Mammary epithelial cell (primary cell): ENCODE measurements at regions of chr3 and their contacts with region 1.

Region 1: GRCh38 chr3:40584625-40585189 is 59.9 kb downstream of the ZNF621 start:
- DNase-seq: peak; percentile 55
- H3K4me3 ChIP-seq: no peak overlapping the region
- H3K27ac ChIP-seq: no peak overlapping the region
- H3K4me1 ChIP-seq: no peaks in the 10 kb centered on the region
- H3K27me3 ChIP-seq: no peaks in the 10 kb centered on the region
- CTCF ChIP-seq: peak; percentile 89 to 100

Region 2: GRCh38 chr3:40680685-40681657 is 96.3 kb after region 1 on chr3:
- CTCF ChIA-PET with region 1: no interaction called
- dilution Hi-C with region 1: loop called (anchors 5 kb)
- in situ Hi-C with region 1: no loop called
- intact Hi-C with region 1: loop called (anchors 5 kb)
- DNase-seq: peak; percentile 34
- H3K4me3 ChIP-seq: no peak overlapping the region
- H3K27ac ChIP-seq: peak overlapping the region; percentile 6
- H3K4me1 ChIP-seq: peaks cover 20% of the 10 kb centered on the region
- H3K27me3 ChIP-seq: no peaks in the 10 kb centered on the region
- CTCF ChIP-seq: peak in 1 of 2 donors; percentile 9

Region 3: DNA sequence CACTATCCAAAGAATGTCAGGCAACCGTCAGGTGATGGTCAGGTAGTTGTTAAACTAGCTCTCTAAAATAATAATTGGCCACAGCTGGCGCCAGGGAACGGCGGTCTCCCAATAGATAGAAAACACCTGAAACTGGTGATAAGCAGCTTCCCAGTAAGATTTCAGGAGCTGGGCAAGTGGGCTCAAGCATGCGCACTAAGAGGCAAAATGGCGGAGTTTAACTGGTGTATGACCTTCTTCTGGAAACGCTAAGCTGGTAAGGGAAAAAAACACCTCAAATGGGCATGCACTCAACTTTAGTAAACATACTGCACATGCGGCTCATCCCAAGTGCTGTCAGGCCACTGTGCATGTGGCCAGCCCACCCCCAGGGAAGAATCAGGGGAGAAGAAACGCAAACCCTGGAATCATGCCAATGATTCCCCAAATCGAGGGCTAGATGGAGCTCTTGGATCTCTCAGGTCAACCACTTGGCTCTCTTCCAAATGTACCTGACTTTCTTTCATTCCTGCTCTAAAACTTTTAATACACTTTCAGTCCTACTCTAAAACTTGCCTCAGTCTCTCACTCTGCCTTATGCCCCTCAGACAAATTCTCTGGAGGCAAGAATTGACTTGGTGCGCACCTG is 135.1 kb after region 1 on chr3:
- CTCF ChIA-PET with region 1: interaction called, 6 read pairs
- dilution Hi-C with region 1: no loop called
- in situ Hi-C with region 1: no loop called
- intact Hi-C with region 1: loop called (anchors 2 kb)
- DNase-seq: peak; percentile 55
- H3K4me3 ChIP-seq: no peak overlapping the region
- H3K27ac ChIP-seq: no peak overlapping the region
- H3K4me1 ChIP-seq: peaks cover 15% of the 10 kb centered on the region
- H3K27me3 ChIP-seq: no peaks in the 10 kb centered on the region
- CTCF ChIP-seq: peak; percentile 24 to 75

Region 4: DNA sequence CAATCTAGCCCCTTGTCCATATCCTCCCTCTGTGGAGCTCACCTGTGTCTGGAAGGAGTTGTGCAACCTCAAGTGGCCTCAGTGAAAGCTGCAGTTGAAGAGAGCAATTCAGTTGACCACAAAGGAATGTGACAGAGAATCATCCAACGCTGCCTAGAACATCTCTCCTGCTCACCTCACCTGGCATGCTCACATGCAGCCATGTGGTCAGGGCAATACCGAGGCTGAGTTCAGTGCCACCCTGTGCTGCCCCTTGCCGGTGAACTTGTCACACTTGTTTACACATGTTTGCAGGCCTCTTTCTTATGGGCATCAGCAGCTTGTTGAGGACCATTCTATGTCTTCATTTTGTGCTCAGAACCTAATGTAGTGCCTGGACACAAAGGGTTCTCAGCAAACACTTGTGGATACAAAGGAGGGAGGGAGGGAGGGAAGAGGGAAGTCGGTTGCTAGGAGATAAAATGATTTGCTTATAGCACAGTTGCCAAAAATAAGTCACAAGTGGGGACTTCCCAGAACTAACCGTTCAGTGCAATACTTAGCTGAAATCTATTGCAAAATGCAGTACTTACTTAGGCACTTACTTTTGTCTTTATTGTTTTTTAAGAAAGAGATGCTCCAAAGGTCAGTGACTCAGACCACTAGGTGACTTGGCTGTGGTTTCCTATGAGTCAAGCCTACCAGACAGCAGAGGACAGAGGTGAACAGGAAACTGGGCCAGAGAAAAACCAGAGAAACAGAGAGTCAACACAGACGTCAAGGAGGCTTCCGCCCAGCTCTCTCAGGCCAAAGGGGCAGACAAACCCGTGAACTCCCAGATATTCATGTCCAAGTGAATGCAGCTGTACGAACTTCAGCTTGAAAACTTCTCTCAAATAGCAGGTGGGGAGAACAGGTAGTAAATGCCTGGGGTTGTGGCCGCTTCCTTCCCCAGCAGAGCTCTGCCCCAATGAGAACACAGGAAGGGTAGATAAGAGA is 386.8 kb after region 1 on chr3:
- CTCF ChIA-PET with region 1: no interaction called
- dilution Hi-C with region 1: no loop called
- in situ Hi-C with region 1: loop called in 1 of 2 experiments (anchors 10 kb)
- intact Hi-C with region 1: loop called (anchors 5 kb)
- DNase-seq: peak; percentile 99
- H3K4me3 ChIP-seq: no peak overlapping the region
- H3K27ac ChIP-seq: peak overlapping the region; percentile 85
- H3K4me1 ChIP-seq: peaks cover 23% of the 10 kb centered on the region
- H3K27me3 ChIP-seq: no peaks in the 10 kb centered on the region
- CTCF ChIP-seq: peak; percentile 32 to 38

Region 5: DNA sequence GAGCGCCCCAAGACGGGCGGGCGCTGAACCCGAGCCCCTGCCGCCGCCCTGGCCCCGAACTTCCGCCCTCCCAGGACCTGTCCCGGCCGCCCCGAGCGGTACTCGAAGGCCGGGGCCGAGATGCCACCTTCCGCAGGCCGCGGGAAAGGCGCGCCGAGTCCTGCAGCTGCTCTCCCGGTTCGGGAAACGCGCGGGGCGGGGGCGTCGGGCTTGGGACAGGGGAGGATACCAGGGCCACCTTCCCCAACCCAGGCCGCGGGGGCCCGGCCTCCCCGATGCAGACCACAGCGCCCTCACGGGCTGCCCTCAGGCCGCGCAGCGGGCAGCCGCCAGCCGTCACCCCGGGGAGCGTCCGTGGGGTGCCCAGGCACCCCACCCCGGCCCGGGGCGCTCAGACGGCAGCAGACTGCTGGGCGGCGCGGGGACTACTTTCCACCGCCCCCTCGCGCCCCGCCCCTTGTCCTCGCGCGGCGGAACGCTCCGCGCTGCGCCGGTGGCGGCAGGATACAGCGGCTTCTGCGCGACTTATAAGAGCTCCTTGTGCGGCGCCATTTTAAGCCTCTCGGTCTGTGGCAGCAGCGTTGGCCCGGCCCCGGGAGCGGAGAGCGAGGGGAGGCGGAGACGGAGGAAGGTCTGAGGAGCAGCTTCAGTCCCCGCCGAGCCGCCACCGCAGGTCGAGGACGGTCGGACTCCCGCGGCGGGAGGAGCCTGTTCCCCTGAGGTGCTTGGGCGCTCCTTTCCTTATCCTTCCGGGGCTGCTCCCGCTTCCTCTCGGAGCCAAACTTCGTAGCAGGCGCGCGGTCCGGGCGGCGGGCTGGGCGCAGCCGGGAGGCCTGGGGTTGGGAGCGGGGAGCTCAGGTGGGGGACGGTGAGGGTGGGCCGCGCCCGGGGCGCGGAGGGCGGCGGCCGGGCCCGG is 614.5 kb after region 1 on chr3 and contains the start of gene CTNNB1:
- CTCF ChIA-PET with region 1: no interaction called
- dilution Hi-C with region 1: no loop called
- in situ Hi-C with region 1: loop called in 1 of 2 experiments (anchors 25 kb)
- intact Hi-C with region 1: loop called (anchors 1 kb)
- DNase-seq: peak; percentile 93
- H3K4me3 ChIP-seq: peak within 1 kb of the TSS; percentile 97 to 100 (median 100)
- H3K27ac ChIP-seq: peak within 1 kb of the TSS; percentile 89
- H3K4me1 ChIP-seq: peaks cover 8% of the 10 kb centered on the region
- H3K27me3 ChIP-seq: no peaks in the 10 kb centered on the region
- CTCF ChIP-seq: peak in 1 of 2 donors; percentile 16
- total RNA-seq, gene CTNNB1: 543 to 1,542 TPM

Region 6: GRCh38 chr3:41574900-41575299 is 990.2 kb after region 1 on chr3:
- CTCF ChIA-PET with region 1: interaction called, 7 read pairs
- dilution Hi-C with region 1: no loop called
- in situ Hi-C with region 1: no loop called
- intact Hi-C with region 1: loop called (anchors 5 kb)
- DNase-seq: no peak
- H3K4me3 ChIP-seq: no peak overlapping the region
- H3K27ac ChIP-seq: no peak overlapping the region
- H3K4me1 ChIP-seq: no peaks in the 10 kb centered on the region
- H3K27me3 ChIP-seq: no peaks in the 10 kb centered on the region
- CTCF ChIP-seq: peak in 1 of 2 donors; percentile 38

Region 7: GRCh38 chr3:41881233-41881821 is 1296.6 kb after region 1 on chr3:
- CTCF ChIA-PET with region 1: no interaction called
- dilution Hi-C with region 1: loop called (anchors 25 kb)
- in situ Hi-C with region 1: loop called (anchors 5 to 10 kb)
- intact Hi-C with region 1: loop called (anchors 1 kb)
- DNase-seq: peak; percentile 29
- H3K4me3 ChIP-seq: no peak overlapping the region
- H3K27ac ChIP-seq: no peak overlapping the region
- H3K4me1 ChIP-seq: no peaks in the 10 kb centered on the region
- H3K27me3 ChIP-seq: no peaks in the 10 kb centered on the region
- CTCF ChIP-seq: peak; percentile 54 to 55